Gastrocnemius medialis (tissue), 4 donors: ENCODE measurements at regions of chr5 and their contacts with region 1.

Region 1: GRCh38 chr5:129921204-129921603 is 16.9 kb downstream of the CHSY3 start:
- DNase-seq: no peak
- ATAC-seq: no peak
- H3K4me3 ChIP-seq: no peak overlapping the region
- H3K27ac ChIP-seq: no peak overlapping the region
- H3K4me1 ChIP-seq: peaks cover 0 to 5% of the 10 kb centered on the region in 2 donors
- H3K27me3 ChIP-seq: no peaks in the 10 kb centered on the region
- CTCF ChIP-seq: no peak
- POLR2A ChIP-seq: no peak

Region 2: GRCh38 chr5:129963359-129963758 is 42.2 kb after region 1 on chr5:
- in situ Hi-C with region 1: no loop called
- intact Hi-C with region 1: loop called (anchors 5 kb)
- DNase-seq: peak in 1 of 2 donors; percentile 31
- ATAC-seq: peak; percentile 90 to 92
- H3K4me3 ChIP-seq: no peak overlapping the region
- H3K27ac ChIP-seq: peak overlapping the region; percentile 21 to 78 (median 72)
- H3K4me1 ChIP-seq: peaks cover 4 to 18% of the 10 kb centered on the region in 2 donors
- H3K27me3 ChIP-seq: no peaks in the 10 kb centered on the region
- CTCF ChIP-seq: no peak
- POLR2A ChIP-seq: peak; percentile 37 to 75